MCF 10A (cell line): ENCODE measurements at regions of chr7 and their contacts with region 1.

Region 1: DNA sequence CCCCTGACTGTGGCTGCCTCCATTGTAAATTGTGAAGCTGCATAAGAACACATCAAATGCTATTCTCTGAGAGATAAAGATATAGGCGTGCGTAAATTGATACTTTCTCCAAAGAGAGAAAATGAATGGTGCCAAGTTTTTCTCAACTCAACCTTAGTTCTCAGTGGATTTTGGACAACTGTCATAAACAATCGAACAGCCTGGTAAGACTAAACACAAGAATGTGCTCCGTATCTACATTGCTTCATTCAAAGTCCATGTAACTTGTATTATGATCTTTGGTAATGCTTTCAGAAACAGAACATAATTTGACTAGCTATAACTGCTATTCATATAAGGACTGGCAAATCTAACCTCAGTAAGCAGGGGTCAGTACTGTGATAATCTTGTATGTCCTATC is 429.1 kb downstream of the SEMA3D start:
- DNase-seq: no peak
- H3K4me3 Mint-ChIP-seq: no peak overlapping the region
- H3K27ac Mint-ChIP-seq: no peak overlapping the region
- H3K4me1 Mint-ChIP-seq: no peaks in the 10 kb centered on the region
- H3K27me3 Mint-ChIP-seq: no peaks in the 10 kb centered on the region
- CTCF ChIP-seq: no peak

Region 2: DNA sequence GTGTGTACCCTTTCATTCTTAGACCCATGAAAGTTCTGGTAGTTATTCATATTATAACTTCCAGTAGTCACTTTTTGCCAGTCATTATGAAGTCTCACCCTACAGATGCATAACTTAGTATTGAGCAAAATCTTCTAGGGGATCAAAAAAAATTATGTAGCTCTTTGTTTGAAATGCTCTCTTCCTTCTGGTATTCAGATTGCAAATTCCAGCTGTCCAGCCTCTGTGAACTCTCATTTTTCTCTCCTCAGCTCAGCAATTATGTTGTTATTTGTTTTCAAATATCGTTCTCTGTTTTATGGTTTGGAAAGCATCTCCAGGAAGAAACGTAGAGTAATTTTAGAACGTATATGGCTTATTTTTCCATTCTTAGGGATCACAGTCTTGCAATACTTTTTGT is 13.4 kb before region 1 on chr7:
- CTCF ChIA-PET with region 1: no interaction called
- POLR2A ChIA-PET with region 1: no interaction called
- intact Hi-C with region 1: loop called (anchors 1 kb)
- DNase-seq: no peak
- H3K4me3 Mint-ChIP-seq: no peak overlapping the region
- H3K27ac Mint-ChIP-seq: no peak overlapping the region
- H3K4me1 Mint-ChIP-seq: no peaks in the 10 kb centered on the region
- H3K27me3 Mint-ChIP-seq: no peaks in the 10 kb centered on the region
- CTCF ChIP-seq: no peak

Region 3: DNA sequence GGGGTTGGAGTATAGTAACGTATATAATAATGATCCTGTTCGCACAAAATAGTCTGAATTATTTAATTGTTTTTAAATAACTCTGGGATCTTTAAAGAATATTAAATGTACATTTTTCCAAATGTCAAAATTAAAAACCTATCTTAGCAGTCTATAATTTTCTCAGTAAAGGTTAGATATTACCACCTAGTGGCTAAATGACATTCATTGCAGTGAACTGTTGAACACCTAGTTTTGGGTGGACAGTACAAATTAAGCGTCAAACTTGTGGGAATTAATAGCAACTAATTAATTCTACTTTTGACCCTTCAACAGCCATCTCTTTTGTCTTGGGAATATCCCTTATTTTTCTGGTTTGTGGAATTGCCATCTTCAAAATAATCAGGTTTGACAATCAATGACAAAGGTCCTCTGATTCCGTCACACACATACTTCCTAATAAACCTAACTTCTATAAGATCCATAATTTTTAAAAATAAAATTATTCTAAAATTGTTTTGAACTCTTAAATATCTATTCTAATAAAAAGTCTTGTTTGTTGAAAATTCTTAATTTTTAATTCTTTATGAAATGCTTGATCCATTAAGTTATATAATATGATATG is 263.4 kb after region 1 on chr7:
- CTCF ChIA-PET with region 1: no interaction called
- POLR2A ChIA-PET with region 1: no interaction called
- intact Hi-C with region 1: no loop called
- DNase-seq: peak; percentile 33
- H3K4me3 Mint-ChIP-seq: no peak overlapping the region
- H3K27ac Mint-ChIP-seq: no peak overlapping the region
- H3K4me1 Mint-ChIP-seq: peaks cover 18% of the 10 kb centered on the region
- H3K27me3 Mint-ChIP-seq: no peaks in the 10 kb centered on the region
- CTCF ChIP-seq: peak; percentile 62